Stomach (tissue), 19 donors: ENCODE measurements at regions of chrX and their contacts with region 1.

Region 1: GRCh38 chrX:56986138-56986537 is 9.2 kb downstream of the SPIN3 start:
- DNase-seq: no peak
- H3K4me3 ChIP-seq: no peak overlapping the region
- H3K27ac ChIP-seq: no peak overlapping the region
- H3K4me1 ChIP-seq: no peaks in the 10 kb centered on the region
- H3K27me3 ChIP-seq: no peaks in the 10 kb centered on the region
- CTCF ChIP-seq: no peak
- EP300 ChIP-seq: no peak
- POLR2A ChIP-seq: no peak

Region 2: GRCh38 chrX:56764153-56764974 is 221.8 kb before region 1 on chrX:
- intact Hi-C with region 1: loop called (anchors 10 kb)
- DNase-seq: peak; percentile 66 to 95
- H3K4me3 ChIP-seq: peak overlapping the region in 2 of 4 donors; percentile 53 to 67
- H3K27ac ChIP-seq: peak overlapping the region in 4 of 5 donors; percentile 27 to 88 (median 81)
- H3K4me1 ChIP-seq: peaks cover 0 to 47% (median 19%) of the 10 kb centered on the region in 4 donors
- H3K27me3 ChIP-seq: peaks cover 0 to 3% (median 0%) of the 10 kb centered on the region in 3 donors
- CTCF ChIP-seq: peak in 4 of 7 experiments; percentile 18 to 74 (median 40)
- EP300 ChIP-seq: no peak
- POLR2A ChIP-seq: no peak